ENCODE measurements at regions of chr3 and their contacts with region 1.

Region 1: GRCh38 chr3:45593708-45594609 is 592 bp upstream of the LIMD1 start:
- DNase-seq: peak; percentile 61 to 78 (median 67)
- H3K4me3 ChIP-seq: peak overlapping the region; percentile 70 to 76
- H3K4me3 Mint-ChIP-seq: peak overlapping the region; percentile 89 to 99 (median 94)
- H3K27ac ChIP-seq: peak overlapping the region; percentile 58
- H3K27ac Mint-ChIP-seq: peak overlapping the region; percentile 81 to 98 (median 90)
- H3K4me1 ChIP-seq: peaks cover 59% of the 10 kb centered on the region
- H3K4me1 Mint-ChIP-seq: peaks cover 42 to 60% (median 52%) of the 10 kb centered on the region in 4 donors
- H3K27me3 ChIP-seq: no peaks in the 10 kb centered on the region
- H3K27me3 Mint-ChIP-seq: no peaks in the 10 kb centered on the region

Region 2: GRCh38 chr3:45507820-45508317 is 86.1 kb before region 1 on chr3:
- CTCF ChIA-PET with region 1: interaction called, 4 read pairs
- POLR2A ChIA-PET with region 1: no interaction called
- intact Hi-C with region 1: loop called (anchors 2 kb)
- DNase-seq: no peak
- H3K4me3 ChIP-seq: no peak overlapping the region
- H3K4me3 Mint-ChIP-seq: no peak overlapping the region
- H3K27ac ChIP-seq: no peak overlapping the region
- H3K27ac Mint-ChIP-seq: no peak overlapping the region
- H3K4me1 ChIP-seq: peaks cover 10% of the 10 kb centered on the region
- H3K4me1 Mint-ChIP-seq: peaks cover 0 to 4% (median 2%) of the 10 kb centered on the region in 4 donors
- H3K27me3 ChIP-seq: no peaks in the 10 kb centered on the region
- H3K27me3 Mint-ChIP-seq: no peaks in the 10 kb centered on the region